Activated CD4-positive, alpha-beta memory T cell treated with anti-CD3 and anti-CD28 coated beads for 36 hours (primary cell): ENCODE measurements at regions of chr11 and their contacts with region 1.

Region 1: DNA sequence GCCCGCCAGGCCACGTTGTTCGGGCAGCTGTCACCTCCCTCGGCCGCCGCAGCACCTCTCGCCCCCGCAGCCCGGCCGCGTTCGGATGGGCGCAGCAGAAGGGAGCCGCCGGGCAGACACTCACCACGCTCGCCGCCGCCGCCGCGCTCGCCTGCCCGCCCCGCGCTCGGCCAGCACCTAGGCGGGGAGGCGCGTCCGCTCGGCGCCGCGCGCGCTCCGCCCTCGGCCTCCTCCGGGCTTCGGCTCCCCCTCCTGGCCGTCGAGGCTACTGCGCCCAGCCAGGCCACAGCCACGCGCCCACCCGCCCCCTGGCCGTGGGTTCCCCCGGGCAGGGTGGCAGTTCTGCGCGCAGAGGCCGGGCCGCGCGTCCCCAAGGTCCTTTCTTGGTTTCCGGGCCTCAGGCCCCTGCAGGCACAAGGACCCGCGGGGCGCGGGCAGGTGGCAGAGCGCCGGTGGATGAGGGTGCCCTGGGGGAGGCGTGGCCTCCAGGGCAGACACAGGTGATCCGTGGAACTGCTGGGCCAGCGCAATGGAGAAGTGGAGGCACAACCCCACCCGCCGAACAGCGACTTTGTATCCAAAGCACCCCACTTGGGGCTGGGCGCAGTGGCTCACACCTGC is at the start of gene SLC25A22:
- DNase-seq: peak; percentile 88
- H3K4me3 Mint-ChIP-seq: peak within 1 kb of the TSS; percentile 81
- H3K27ac Mint-ChIP-seq: peak within 1 kb of the TSS; percentile 76
- H3K4me1 Mint-ChIP-seq: peaks cover 19% of the 10 kb centered on the region
- H3K27me3 Mint-ChIP-seq: no peaks in the 10 kb centered on the region
- total RNA-seq, gene SLC25A22: 28.4 to 32.2 TPM

Region 2: DNA sequence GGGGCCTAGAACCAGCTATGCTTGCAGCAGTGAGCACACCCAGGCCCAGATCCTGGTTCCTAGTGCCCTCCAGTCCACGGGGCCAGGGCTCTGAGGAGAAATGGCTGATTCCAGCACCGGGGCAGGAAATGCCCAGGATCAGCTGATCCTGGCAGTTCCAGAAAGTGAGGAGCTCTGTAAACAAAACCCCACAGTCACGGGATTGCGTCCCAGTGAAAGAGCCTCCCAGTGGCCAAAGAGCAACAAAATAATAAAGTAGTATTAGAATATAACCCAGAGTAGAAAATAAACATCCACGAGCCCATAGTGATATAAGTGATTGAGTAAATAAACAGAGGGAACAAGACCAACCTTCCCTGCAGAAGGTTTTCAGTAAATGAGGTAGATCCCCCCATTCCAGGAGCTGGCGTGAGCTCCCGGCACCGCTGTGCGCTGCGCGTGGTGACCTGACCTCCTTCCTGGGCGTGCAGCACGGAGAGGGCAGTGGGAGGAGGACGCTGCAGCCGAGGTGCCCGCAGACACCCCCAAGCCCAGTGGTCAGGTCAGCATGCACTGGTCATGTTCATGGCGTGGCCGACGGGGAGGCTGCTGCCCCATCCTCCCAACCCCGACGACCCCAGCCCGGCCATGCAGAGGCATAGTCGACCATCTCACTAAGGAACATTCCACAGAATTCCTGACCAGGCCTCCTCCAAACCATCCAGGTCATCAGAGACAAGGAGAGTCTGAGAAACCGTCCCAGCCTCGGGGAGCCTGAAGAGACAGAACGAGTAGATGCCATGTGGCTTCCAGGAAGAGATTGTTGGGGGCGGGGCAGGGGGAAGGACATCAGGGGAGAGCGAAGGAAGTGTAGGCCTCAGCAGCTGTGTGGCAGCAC is 328.3 kb before region 1 on chr11:
- CTCF ChIA-PET with region 1: no interaction called
- POLR2A ChIA-PET with region 1: no interaction called
- intact Hi-C with region 1: no loop called
- DNase-seq: no peak
- H3K4me3 Mint-ChIP-seq: no peak overlapping the region
- H3K27ac Mint-ChIP-seq: no peak overlapping the region
- H3K4me1 Mint-ChIP-seq: no peaks in the 10 kb centered on the region
- H3K27me3 Mint-ChIP-seq: no peaks in the 10 kb centered on the region

Region 3: GRCh38 chr11:568306-569157 is 229.7 kb before region 1 on chr11:
- CTCF ChIA-PET with region 1: no interaction called
- POLR2A ChIA-PET with region 1: no interaction called
- intact Hi-C with region 1: loop called (anchors 5 kb)
- DNase-seq: peak; percentile 95
- H3K4me3 Mint-ChIP-seq: peak overlapping the region; percentile 75
- H3K27ac Mint-ChIP-seq: peak overlapping the region; percentile 58
- H3K4me1 Mint-ChIP-seq: peaks cover 5% of the 10 kb centered on the region
- H3K27me3 Mint-ChIP-seq: no peaks in the 10 kb centered on the region

Region 4: DNA sequence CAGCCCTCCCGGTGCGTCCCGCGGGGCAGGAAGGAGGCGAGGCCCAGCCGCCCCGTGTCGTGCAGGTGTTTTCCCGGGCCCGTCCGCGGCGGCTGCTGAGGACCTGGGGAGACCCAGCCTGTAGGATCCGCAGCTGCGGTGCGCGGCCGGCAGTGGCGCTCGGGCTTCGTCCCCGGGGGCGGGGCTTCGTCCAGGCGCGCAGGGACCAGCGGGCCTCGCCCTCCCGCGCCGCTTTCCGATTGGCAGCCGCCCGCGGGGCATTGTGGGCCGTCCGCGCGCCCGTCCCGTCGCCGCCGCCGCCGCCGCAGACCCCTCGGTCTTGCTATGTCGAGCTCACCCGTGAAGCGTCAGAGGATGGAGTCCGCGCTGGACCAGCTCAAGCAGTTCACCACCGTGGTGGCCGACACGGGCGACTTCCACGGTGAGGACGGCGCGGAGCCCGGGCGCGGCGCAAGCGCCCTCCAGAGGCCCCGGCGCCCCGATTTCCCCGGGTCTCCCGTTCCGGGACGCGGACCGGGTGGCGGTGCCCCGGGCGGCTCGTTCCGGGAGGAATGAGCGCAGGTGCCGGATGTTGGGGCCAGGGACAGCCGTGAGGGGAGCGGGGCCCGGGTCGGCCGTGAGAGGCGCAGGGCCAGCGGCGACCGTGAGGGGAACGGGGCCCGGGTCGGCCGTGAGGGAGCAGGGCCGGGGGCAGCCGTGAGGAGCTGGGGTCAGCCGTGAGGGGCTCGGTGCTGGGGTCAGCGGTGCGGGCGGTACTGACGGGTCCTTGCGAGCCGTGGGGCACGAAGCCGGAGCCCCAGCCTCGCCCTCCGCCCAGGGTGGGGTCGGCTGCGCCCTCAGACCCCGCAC is 50.8 kb before region 1 on chr11 and contains the start of gene TALDO1:
- CTCF ChIA-PET with region 1: no interaction called
- POLR2A ChIA-PET with region 1: interaction called, 3 read pairs
- intact Hi-C with region 1: loop called (anchors 2 kb)
- DNase-seq: peak; percentile 92
- H3K4me3 Mint-ChIP-seq: peak within 1 kb of the TSS; percentile 81
- H3K27ac Mint-ChIP-seq: peak within 1 kb of the TSS; percentile 54
- H3K4me1 Mint-ChIP-seq: peaks cover 17% of the 10 kb centered on the region
- H3K27me3 Mint-ChIP-seq: no peaks in the 10 kb centered on the region
- total RNA-seq, gene TALDO1: 284 to 296 TPM

Region 5: DNA sequence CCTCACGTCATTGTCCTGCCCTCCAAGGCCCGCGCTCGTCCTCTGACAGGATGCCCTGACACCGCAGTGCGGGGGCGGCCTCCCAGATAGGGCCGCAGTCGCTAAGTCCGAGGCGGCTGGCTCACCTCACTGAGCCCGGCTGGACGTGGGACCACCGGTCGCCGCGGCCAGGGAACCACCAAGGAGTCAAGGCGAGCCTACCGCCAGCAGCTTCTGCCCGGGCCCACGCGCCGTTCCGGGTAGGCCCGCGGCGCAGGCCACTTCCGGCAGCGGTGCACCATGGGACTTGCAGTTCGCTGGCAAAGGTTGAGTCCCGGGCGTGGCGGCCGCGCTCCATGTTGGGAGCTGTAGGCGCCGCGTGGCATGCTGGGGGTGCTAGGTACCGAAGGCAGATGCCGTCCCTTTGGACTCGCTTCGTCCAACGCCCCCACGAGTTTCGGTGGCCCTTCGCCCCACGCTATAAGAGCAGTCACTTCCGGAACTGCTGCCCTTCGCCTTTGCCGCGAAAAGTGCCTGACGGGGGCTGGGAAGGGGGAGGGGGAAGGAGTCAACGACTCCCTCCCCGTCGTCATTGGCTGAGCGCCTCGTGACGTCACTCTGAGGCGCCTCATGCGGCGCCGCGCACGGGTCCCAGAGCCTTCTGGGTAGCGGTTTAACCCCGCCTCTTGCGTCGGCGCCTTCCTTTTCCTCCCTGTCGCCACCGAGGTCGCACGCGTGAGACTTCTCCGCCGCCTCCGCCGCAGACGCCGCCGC is 11.3 kb after region 1 on chr11 and contains the start of gene RPLP2:
- CTCF ChIA-PET with region 1: interaction called, 7 read pairs
- POLR2A ChIA-PET with region 1: interaction called, 14 read pairs
- intact Hi-C with region 1: loop called (anchors 1 kb)
- DNase-seq: peak; percentile 99
- H3K4me3 Mint-ChIP-seq: peak within 1 kb of the TSS; percentile 92
- H3K27ac Mint-ChIP-seq: peak within 1 kb of the TSS; percentile 99
- H3K4me1 Mint-ChIP-seq: peaks cover 30% of the 10 kb centered on the region
- H3K27me3 Mint-ChIP-seq: no peaks in the 10 kb centered on the region
- total RNA-seq, gene RPLP2: 2,941 to 2,963 TPM

Region 6: GRCh38 chr11:830295-831117 is 32.3 kb after region 1 on chr11:
- CTCF ChIA-PET with region 1: no interaction called
- POLR2A ChIA-PET with region 1: no interaction called
- intact Hi-C with region 1: no loop called
- DNase-seq: peak; percentile 70
- H3K4me3 Mint-ChIP-seq: peak overlapping the region; percentile 16
- H3K27ac Mint-ChIP-seq: no peak overlapping the region
- H3K4me1 Mint-ChIP-seq: peaks cover 33% of the 10 kb centered on the region
- H3K27me3 Mint-ChIP-seq: peaks cover 35% of the 10 kb centered on the region

Region 7: GRCh38 chr11:870127-870413 is 71.9 kb after region 1 on chr11:
- CTCF ChIA-PET with region 1: no interaction called
- POLR2A ChIA-PET with region 1: no interaction called
- intact Hi-C with region 1: no loop called
- DNase-seq: no peak
- H3K4me3 Mint-ChIP-seq: no peak overlapping the region
- H3K27ac Mint-ChIP-seq: no peak overlapping the region
- H3K4me1 Mint-ChIP-seq: no peaks in the 10 kb centered on the region
- H3K27me3 Mint-ChIP-seq: no peaks in the 10 kb centered on the region